ENCODE measurements at regions of chr10 and their contacts with region 1.

Region 1: DNA sequence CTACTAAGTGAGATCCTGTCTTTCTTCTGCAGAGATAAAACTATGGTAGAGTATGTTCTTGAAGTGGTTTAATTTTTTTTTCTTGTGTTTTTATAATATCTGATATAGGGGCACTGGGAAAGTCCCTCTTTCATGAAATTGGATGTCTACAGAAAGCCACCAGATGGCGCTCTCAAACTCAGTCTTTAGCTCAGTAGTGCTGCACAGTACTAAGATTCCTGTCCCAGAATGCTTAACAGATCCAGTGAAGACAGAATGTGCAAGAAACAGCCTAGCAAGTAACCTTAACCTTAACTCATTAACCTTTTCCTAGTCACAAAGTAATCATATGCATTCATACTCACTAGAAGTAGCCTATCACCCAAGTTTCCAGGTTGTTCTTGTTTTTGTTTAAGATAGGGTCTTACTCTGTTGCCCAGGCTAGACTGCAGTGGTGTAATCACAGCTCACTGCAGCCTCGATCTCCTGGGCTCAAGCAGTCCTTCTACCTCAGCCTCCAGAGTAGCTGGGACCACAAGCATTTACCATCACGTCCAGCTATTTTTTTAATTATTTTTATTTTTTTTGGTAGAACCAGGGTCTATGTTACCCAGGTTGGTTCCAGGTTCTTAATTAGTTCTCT is 56.7 kb downstream of the IDE start:
- DNase-seq: peak; percentile 66
- H3K4me3 Mint-ChIP-seq: no peak overlapping the region
- H3K27ac Mint-ChIP-seq: no peak overlapping the region
- H3K4me1 Mint-ChIP-seq: peaks cover 6% of the 10 kb centered on the region
- H3K27me3 Mint-ChIP-seq: no peaks in the 10 kb centered on the region

Region 2: DNA sequence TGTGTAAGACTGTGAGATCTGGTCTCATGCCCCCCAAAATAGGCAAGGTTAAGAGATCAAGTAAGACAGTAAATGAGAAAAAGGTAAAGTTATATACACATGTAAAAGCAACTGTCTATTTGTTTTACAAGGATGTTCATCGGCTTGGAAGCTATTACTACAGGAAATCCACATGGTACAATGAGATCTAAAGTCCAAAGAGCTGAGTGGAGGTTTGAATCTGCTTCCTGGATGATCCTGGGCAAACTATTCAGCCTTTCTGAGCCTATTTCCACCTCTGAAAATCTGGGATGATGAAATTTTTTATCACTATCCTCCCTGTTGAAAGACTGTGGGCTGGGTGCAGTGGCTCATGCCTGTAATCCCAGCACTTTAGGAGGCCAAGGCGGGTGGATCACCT is 66.2 kb before region 1 on chr10:
- CTCF ChIA-PET with region 1: no interaction called
- POLR2A ChIA-PET with region 1: no interaction called
- intact Hi-C with region 1: no loop called
- DNase-seq: no peak
- H3K4me3 Mint-ChIP-seq: no peak overlapping the region
- H3K27ac Mint-ChIP-seq: no peak overlapping the region
- H3K4me1 Mint-ChIP-seq: no peaks in the 10 kb centered on the region
- H3K27me3 Mint-ChIP-seq: no peaks in the 10 kb centered on the region

Region 3: DNA sequence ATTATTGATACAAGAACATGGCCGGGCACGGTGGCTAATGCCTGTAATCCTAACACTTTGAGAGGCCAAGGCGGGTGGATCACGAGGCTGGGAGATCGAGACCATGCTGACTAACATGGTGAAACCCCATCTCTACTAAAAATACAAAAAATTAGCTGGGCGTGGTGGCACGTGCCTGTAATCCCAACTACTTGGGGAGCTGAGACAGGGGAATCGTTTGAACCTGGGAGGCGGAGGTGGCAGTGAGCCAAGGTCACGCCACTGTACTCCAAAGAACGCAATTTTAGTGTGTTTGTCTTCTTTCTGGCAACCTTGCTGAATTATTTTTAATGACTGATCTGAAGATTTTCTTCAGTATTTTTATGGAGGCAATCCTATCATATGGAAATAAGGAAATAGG is 10.6 kb after region 1 on chr10:
- CTCF ChIA-PET with region 1: interaction called, 18 read pairs
- POLR2A ChIA-PET with region 1: no interaction called
- intact Hi-C with region 1: no loop called
- DNase-seq: no peak
- H3K4me3 Mint-ChIP-seq: no peak overlapping the region
- H3K27ac Mint-ChIP-seq: no peak overlapping the region
- H3K4me1 Mint-ChIP-seq: no peaks in the 10 kb centered on the region
- H3K27me3 Mint-ChIP-seq: no peaks in the 10 kb centered on the region

Region 4: DNA sequence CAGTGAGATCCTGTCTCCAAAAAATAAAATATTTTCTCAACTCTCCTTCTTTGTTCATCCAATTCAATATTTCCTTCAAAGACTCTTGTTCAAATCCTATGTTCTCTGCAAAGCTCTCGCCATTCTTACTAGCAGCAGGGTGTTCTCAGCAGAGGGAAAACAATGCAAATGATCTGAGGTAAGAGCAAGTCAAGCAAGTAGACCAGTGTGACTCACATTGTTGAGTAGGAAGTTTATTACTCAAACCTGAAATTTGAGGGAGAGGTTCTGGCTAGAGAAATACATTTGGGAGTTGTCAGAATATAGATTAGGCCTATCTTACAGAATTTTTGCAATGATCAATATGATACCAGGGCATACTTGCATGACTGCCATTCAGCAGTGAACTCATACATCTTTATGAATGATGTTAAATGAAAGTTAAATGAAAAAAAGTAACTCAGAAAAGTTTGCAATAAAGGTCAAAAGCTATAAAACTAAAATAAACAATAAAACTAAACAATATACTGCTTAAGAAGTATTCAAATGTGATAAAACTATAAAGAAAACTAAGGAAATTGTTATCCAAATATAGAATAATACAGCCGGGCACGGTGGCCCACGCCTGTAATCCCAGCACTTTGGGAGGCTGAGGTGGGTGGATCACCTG is 50.9 kb after region 1 on chr10:
- CTCF ChIA-PET with region 1: interaction called, 183 read pairs
- POLR2A ChIA-PET with region 1: interaction called, 14 read pairs
- intact Hi-C with region 1: no loop called
- DNase-seq: no peak
- H3K4me3 Mint-ChIP-seq: no peak overlapping the region
- H3K27ac Mint-ChIP-seq: peak overlapping the region; percentile 20
- H3K4me1 Mint-ChIP-seq: peaks cover 56% of the 10 kb centered on the region
- H3K27me3 Mint-ChIP-seq: no peaks in the 10 kb centered on the region

Measured in activated CD4-positive, alpha-beta memory T cell treated with anti-CD3 and anti-CD28 coated beads for 36 hours (primary cell).